Activated B cell treated with CpG ODN at 0.5 μM for 24 hours (primary cell): ENCODE measurements at regions of chr2 and their contacts with region 1.

Region 1: DNA sequence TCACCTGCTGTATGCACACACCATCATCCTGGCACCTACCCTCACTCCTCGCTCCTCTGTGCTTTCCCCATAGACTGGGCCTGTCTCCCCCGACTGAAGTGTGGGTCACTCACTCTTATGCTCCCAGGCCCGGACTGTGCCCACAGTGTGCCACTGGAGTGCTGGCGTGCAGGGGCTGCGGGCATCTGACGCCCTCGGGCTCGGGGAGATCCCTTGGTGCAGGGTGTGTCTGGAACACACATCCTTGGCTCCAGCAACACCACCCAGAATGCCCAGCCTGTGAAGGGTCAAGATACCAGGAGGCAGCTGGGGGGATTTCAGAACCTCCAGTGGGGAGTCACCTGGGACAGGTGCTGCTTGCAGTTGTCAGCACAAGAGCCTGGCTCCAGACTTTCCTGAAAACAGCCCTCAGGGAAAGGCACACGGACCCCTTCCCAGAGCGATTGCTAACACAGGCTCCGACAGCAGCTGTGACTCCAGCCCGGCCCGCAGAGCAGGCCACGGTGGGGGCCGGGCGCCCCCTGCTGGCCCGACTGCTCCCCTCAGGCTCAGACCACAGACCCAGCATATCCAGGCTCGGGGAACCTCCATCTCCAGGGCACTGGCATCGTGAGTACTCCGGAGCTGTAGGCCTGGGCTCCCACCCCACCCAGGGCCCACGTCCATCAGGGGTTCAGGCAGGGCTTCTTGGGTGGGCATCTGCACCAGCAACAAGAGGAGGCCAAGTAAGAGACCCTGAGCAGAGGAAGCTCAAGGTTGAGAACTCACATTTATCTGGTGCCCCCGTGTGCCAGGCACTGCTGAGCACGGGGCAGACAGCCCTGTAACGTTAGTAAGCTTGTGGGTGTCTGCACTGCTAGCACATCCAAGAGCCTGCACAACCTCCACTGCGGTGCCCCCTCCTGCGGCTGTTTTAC is 8.6 kb downstream of the HS1BP3 start:
- DNase-seq: peak; percentile 73
- ATAC-seq: peak; percentile 100
- H3K4me3 Mint-ChIP-seq: no peak overlapping the region
- H3K27ac Mint-ChIP-seq: no peak overlapping the region
- H3K4me1 Mint-ChIP-seq: peaks cover 5% of the 10 kb centered on the region
- H3K27me3 Mint-ChIP-seq: no peaks in the 10 kb centered on the region
- CTCF ChIP-seq: peak; percentile 55

Region 2: DNA sequence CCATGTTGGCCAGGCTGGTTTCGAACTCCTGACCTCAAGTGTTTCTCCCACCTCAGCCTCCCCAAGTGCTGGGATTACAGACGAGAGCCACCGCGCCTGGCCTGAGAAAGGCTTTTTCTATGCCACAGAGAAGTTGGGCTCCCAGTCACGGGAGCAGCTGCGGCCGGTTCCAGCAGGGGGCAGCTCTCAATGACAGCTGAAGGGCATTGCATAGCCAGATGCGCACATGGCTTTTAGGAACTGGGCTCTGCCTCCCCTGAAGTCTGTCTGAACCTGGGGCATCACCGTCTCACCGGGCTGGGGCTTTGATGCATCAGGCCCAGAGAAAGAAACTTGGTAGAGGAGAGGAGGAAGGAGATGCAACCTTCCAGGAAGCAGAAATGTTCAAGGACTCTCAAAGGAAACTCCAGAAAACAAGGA is 506.7 kb before region 1 on chr2:
- CTCF ChIA-PET with region 1: no interaction called
- POLR2A ChIA-PET with region 1: no interaction called
- intact Hi-C with region 1: loop called (anchors 1 kb)
- DNase-seq: peak; percentile 23
- ATAC-seq: peak; percentile 56
- H3K4me3 Mint-ChIP-seq: no peak overlapping the region
- H3K27ac Mint-ChIP-seq: no peak overlapping the region
- H3K4me1 Mint-ChIP-seq: no peaks in the 10 kb centered on the region
- H3K27me3 Mint-ChIP-seq: peaks cover 15% of the 10 kb centered on the region
- CTCF ChIP-seq: no peak

Region 3: DNA sequence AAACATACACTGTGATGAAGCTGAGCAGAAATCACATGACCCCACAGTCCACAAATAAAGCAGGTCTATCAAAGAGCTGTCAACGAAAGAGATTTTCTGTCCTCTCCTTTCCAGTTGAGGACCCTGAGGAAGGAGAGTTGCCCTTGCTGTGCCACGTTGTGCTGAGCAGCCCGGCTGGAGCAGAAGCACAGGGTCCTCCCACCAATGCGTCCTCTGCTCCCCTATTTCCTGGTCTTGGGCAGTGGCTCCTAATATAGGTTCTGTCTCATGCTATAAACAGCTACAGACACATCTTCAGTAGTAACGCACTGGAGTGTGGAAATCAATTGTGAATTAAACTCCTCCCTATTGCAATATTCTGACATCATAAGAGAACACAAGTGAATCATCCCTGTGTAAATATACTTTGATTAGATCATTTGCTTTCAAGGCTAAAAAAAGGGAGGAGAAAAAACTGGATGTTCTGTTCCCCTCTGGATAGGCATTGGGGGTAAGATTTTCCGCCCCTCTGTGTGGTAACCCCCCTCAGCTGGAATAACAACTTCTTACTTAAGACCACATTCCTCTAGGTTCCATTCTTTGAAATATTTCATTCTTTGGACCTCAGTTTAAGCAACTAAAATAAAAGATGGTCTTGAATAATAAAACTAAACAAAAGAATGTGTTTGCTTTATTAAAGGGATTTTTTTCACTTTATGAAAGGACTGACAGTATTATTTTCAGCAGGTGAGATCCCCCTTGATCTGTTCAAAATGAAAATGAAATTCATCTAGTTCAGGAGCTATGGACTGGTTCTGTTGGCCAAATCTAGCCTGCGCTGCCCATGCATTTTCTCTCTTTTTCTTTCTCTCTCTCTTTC is 203.8 kb before region 1 on chr2:
- CTCF ChIA-PET with region 1: interaction called, 52 read pairs
- POLR2A ChIA-PET with region 1: interaction called, 8 read pairs
- intact Hi-C with region 1: loop called (anchors 1 kb)
- DNase-seq: no peak
- ATAC-seq: no peak
- H3K4me3 Mint-ChIP-seq: no peak overlapping the region
- H3K27ac Mint-ChIP-seq: no peak overlapping the region
- H3K4me1 Mint-ChIP-seq: no peaks in the 10 kb centered on the region
- H3K27me3 Mint-ChIP-seq: peaks cover 13% of the 10 kb centered on the region
- CTCF ChIP-seq: no peak